MCF 10A (cell line): ENCODE measurements at regions of chr4 and their contacts with region 1.

Region 1: GRCh38 chr4:3480528-3481112 is 17.5 kb downstream of the DOK7 start:
- DNase-seq: peak; percentile 77
- H3K4me3 Mint-ChIP-seq: no peak overlapping the region
- H3K27ac Mint-ChIP-seq: no peak overlapping the region
- H3K4me1 Mint-ChIP-seq: peaks cover 9% of the 10 kb centered on the region
- H3K27me3 Mint-ChIP-seq: no peaks in the 10 kb centered on the region
- CTCF ChIP-seq: peak; percentile 99

Region 2: DNA sequence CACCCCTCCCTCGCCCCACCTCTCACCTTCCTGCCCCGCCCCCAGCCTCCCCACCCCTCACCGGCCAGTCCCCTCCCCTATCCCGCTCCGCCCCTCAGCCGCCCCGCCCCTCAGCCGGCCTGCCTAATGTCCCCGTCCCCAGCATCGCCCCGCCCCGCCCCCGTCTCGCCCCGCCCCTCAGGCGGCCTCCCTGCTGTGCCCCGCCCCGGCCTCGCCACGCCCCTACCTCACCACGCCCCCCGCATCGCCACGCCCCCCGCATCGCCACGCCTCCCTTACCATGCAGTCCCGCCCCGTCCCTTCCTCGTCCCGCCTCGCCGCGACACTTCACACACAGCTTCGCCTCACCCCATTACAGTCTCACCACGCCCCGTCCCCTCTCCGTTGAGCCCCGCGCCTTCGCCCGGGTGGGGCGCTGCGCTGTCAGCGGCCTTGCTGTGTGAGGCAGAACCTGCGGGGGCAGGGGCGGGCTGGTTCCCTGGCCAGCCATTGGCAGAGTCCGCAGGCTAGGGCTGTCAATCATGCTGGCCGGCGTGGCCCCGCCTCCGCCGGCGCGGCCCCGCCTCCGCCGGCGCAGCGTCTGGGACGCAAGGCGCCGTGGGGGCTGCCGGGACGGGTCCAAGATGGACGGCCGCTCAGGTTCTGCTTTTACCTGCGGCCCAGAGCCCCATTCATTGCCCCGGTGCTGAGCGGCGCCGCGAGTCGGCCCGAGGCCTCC is 406.4 kb before region 1 on chr4 and contains the starts of genes HTT and HTT-AS:
- CTCF ChIA-PET with region 1: no interaction called
- POLR2A ChIA-PET with region 1: no interaction called
- intact Hi-C with region 1: no loop called
- DNase-seq: peak; percentile 91
- H3K4me3 Mint-ChIP-seq: peak within 1 kb of the TSS; percentile 86
- H3K27ac Mint-ChIP-seq: peak within 1 kb of the TSS; percentile 87
- H3K4me1 Mint-ChIP-seq: peaks cover 12% of the 10 kb centered on the region
- H3K27me3 Mint-ChIP-seq: no peaks in the 10 kb centered on the region
- CTCF ChIP-seq: no peak
- total RNA-seq, gene HTT: 47.4 and 54.4 TPM in 2 replicates
- total RNA-seq, gene HTT-AS: not detected in 2 replicates

Region 3: DNA sequence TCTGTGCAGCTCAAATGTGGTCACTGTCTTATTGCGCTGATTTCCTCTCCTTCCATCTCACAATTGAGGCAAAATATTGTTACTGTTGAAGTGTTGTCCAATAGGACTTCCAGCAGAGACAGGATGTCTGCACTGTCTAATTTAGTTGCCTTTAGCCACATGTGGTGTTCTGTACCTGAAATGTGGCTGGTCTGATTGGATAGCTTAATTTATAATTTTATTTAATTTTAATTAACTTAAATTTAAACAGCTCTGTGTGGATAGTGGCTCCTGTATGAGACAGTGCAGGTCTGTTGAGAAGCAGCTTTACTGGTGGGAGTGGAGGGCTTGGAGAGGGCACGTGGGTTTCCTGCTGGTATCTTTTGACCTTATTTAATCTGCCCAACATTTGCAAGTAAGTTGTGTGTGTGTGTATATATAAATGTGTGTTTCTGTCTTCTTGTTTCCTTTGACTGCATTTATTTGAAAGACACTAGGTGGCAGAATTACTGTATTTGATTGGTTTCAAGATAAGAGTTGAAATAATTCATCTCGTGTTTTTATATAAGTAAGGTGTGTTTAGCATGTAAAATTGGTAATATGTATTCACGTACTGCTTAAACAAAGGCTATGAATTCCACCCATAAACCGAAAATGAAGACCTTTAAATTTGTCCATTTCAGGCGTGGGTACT is 287.0 kb before region 1 on chr4:
- CTCF ChIA-PET with region 1: interaction called, 17 read pairs
- POLR2A ChIA-PET with region 1: no interaction called
- intact Hi-C with region 1: no loop called
- DNase-seq: peak; percentile 6
- H3K4me3 Mint-ChIP-seq: no peak overlapping the region
- H3K27ac Mint-ChIP-seq: no peak overlapping the region
- H3K4me1 Mint-ChIP-seq: peaks cover 9% of the 10 kb centered on the region
- H3K27me3 Mint-ChIP-seq: no peaks in the 10 kb centered on the region
- CTCF ChIP-seq: peak; percentile 34

Region 4: DNA sequence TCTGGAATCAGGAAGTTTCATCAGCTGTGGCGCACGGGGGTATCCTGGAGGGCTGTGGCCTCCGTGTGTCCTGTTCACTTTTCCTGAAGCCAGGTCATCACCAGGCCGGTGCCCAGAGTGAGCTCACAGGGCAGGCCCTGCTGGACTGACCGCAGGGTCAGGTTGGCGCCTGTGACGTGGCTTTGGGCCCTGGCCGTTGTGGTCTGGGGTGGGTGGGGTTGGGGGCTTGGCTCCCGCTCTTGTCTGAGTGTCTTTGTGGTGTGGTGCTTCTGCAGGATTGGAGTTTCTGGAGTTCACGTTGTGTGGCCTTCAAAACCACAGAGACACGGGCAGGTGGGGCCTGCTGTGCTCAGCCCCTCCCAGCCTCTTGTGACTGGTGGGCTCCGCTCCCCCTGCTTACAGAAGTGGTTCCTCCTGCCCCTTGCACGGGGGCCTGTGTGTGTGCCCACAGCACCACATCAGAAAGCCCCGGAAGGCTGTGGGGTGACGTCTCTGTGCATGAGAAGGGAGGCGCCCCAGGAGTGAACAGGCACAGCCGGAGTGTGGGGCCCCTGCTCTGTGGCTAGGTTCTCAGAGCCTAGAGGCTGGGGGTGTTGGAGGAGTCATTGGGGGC is 178.3 kb before region 1 on chr4:
- CTCF ChIA-PET with region 1: no interaction called
- POLR2A ChIA-PET with region 1: no interaction called
- intact Hi-C with region 1: no loop called
- DNase-seq: no peak
- H3K4me3 Mint-ChIP-seq: no peak overlapping the region
- H3K27ac Mint-ChIP-seq: no peak overlapping the region
- H3K4me1 Mint-ChIP-seq: peaks cover 5% of the 10 kb centered on the region
- H3K27me3 Mint-ChIP-seq: no peaks in the 10 kb centered on the region
- CTCF ChIP-seq: no peak

Region 5: GRCh38 chr4:3442959-3443749 is 37.5 kb before region 1 on chr4:
- CTCF ChIA-PET with region 1: interaction called, 21 read pairs
- POLR2A ChIA-PET with region 1: no interaction called
- intact Hi-C with region 1: no loop called
- DNase-seq: peak; percentile 56
- H3K4me3 Mint-ChIP-seq: no peak overlapping the region
- H3K27ac Mint-ChIP-seq: no peak overlapping the region
- H3K4me1 Mint-ChIP-seq: peaks cover 10% of the 10 kb centered on the region
- H3K27me3 Mint-ChIP-seq: no peaks in the 10 kb centered on the region
- CTCF ChIP-seq: peak; percentile 97

Region 6: DNA sequence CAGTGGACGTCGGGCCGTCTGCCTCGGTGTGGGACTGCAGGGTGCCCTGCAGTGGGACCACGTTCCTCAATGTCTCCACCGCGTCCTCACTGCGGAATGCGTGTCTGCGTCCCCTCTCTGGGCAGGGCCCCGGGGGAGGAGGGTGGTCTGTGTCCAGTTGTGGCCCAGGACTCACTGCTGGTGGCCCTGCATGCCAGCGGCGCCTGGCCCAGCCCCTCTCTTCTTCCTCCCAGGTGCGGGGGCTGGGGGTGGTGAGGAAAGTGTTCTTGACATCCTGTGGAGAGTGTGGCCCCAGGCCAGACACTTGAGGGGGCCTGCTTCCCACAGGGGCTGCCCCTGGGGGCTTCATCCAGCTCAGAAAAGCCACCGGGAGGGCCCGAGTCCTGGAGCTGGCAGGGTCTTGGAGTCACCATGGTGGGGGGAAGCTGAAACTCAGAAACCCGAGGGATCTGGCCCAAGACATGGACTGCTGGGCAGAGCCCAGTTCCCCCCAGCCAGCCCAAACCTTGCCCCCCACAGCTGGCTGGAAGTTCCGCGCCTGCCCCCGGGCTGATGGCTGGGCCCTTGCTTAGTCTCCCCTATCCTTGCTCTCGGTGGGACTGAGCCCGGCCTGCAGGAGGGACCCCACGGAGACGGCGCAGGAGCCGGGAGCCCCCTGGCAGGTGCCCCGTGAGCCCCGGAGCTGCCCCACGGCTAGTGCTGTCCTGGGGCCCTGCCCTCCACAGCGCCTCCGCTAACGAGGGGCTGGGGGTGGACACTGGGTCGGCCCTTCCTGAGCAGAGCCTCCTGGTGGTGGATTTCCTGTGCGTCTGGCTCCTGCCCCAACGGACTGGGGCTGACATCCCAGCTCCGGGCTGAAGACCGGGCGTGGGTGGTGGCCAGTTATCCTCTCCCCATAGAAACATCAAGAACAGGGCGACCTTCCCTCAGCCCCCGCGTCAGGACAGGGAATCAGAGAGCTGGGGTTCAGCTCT is 14.6 kb before region 1 on chr4:
- CTCF ChIA-PET with region 1: interaction called, 26 read pairs
- POLR2A ChIA-PET with region 1: interaction called, 4 read pairs
- intact Hi-C with region 1: no loop called
- DNase-seq: no peak
- H3K4me3 Mint-ChIP-seq: no peak overlapping the region
- H3K27ac Mint-ChIP-seq: no peak overlapping the region
- H3K4me1 Mint-ChIP-seq: peaks cover 11% of the 10 kb centered on the region
- H3K27me3 Mint-ChIP-seq: no peaks in the 10 kb centered on the region
- CTCF ChIP-seq: no peak

Region 7: GRCh38 chr4:3880615-3881120 is 400.0 kb after region 1 on chr4:
- CTCF ChIA-PET with region 1: interaction called, 12 read pairs
- POLR2A ChIA-PET with region 1: no interaction called
- intact Hi-C with region 1: loop called (anchors 2 kb)
- DNase-seq: peak; percentile 71
- H3K4me3 Mint-ChIP-seq: no peak overlapping the region
- H3K27ac Mint-ChIP-seq: no peak overlapping the region
- H3K4me1 Mint-ChIP-seq: no peaks in the 10 kb centered on the region
- H3K27me3 Mint-ChIP-seq: peaks cover 85% of the 10 kb centered on the region
- CTCF ChIP-seq: peak; percentile 69